ENCODE measurements at regions of chr13 and their contacts with region 1.

Region 1: DNA sequence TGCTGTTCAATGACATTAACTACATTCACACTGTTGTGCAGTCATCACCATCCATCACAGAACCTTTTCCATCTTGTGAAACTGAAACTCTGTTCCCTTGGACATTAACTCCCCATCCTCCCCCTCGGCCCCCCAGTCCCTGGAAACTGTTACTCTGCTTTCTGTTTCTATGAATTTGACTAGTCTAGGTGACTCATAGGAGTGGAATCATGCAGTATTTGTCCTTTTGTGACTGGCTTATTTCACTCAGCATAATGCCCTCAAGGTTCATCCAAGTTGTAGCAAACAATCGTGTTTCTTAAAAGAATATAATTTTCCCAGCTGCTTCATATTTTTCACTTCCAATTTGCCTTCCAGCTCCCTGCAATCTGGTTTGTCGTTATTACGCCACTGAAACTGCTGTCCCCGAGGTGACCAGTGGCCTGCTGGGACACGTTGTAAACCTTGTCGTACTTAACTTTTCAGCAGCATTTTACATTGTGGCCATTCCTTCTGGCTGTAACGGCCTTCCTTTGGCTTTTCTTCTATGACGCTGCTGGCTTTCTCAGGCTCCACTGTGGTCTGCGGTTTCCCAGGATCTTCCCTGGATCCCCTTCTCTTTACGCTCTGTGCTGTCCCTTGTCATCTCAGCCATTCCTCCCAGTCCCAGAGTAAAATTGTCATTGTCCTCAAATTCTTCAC is 74.0 kb downstream of the DHRS12 start:
- DNase-seq: no peak
- ATAC-seq: peak; percentile 43 to 80 (median 64)
- H3K4me3 ChIP-seq: peak overlapping the region in 1 of 10 donors; percentile 6
- H3K27ac ChIP-seq: peak overlapping the region; percentile 19 to 80 (median 58)
- H3K4me1 ChIP-seq: peaks cover 0 to 56% (median 27%) of the 10 kb centered on the region in 9 donors
- H3K27me3 ChIP-seq: no peaks in the 10 kb centered on the region
- CTCF ChIP-seq: no peak

Region 2: GRCh38 chr13:51435002-51435578 is 294.9 kb before region 1 on chr13:
- intact Hi-C with region 1: loop called in 5 of 10 experiments (anchors 5 to 10 kb)
- DNase-seq: no peak
- ATAC-seq: no peak
- H3K4me3 ChIP-seq: no peak overlapping the region
- H3K27ac ChIP-seq: no peak overlapping the region
- H3K4me1 ChIP-seq: peaks cover 0 to 6% (median 0%) of the 10 kb centered on the region in 9 donors
- H3K27me3 ChIP-seq: no peaks in the 10 kb centered on the region
- CTCF ChIP-seq: peak in 8 of 9 donors; percentile 19 to 72 (median 62)

Region 3: GRCh38 chr13:51444922-51445321 is 285.1 kb before region 1 on chr13:
- intact Hi-C with region 1: loop called in 8 of 10 experiments (anchors 5 to 10 kb)
- DNase-seq: no peak
- ATAC-seq: peak in 1 of 8 donors; percentile 28
- H3K4me3 ChIP-seq: no peak overlapping the region
- H3K27ac ChIP-seq: no peak overlapping the region
- H3K4me1 ChIP-seq: peaks cover 0 to 21% (median 5%) of the 10 kb centered on the region in 9 donors
- H3K27me3 ChIP-seq: no peaks in the 10 kb centered on the region
- CTCF ChIP-seq: peak in 6 of 9 donors; percentile 1 to 57 (median 42)

Region 4: DNA sequence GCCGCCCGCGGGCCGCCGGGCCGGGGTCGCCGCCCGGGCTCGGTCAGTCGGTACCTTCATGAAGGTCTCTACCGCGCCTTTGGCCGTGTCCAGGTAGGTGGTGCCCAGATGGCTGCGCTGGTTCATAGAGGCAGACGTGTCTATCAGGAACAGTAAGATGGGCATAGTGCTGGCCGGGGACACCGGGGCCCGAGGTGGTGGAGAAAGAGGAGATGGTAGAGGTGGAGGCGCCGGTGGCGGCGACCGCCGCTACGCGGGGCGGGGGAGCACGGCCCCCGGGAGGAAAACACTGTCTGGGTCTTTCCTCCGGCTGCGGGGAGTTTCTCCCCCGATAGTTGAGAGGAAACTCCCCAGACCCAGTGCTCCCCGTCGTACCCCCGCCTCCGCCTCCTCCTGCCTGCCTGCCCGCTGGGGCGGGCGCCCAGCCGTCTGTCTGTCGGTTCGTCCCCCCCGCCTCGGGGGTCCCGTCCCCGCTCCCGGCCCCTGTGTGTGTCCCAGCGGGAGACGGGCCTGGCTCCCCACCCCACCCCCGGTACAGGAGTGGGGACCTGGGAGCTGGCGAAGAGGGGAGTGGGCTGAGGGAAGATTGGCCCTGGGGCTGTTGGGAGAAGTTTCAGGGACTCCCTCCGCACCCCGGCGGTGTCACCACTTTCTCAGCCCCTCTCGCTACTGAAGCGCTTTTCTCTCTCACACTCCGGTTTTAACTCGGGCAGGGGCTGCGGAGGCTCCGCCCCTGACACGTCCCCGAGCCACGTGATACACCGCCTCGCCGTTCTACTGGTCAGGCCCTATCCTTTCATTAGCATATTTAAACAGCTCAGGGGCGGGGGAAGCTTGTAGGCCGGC is 277.4 kb before region 1 on chr13 and contains the start of gene INTS6:
- intact Hi-C with region 1: loop called in 7 of 10 experiments (anchors 5 to 10 kb)
- DNase-seq: peak; percentile 99 to 100
- ATAC-seq: peak; percentile 91 to 97 (median 96)
- H3K4me3 ChIP-seq: peak within 1 kb of the TSS; percentile 85 to 99 (median 94)
- H3K27ac ChIP-seq: peak within 1 kb of the TSS; percentile 91 to 100 (median 99)
- H3K4me1 ChIP-seq: peaks cover 2 to 47% (median 30%) of the 10 kb centered on the region in 9 donors
- H3K27me3 ChIP-seq: no peaks in the 10 kb centered on the region
- CTCF ChIP-seq: no peak
- total RNA-seq, gene INTS6: 20.2 to 31.1 (median 24.8) TPM

Region 5: DNA sequence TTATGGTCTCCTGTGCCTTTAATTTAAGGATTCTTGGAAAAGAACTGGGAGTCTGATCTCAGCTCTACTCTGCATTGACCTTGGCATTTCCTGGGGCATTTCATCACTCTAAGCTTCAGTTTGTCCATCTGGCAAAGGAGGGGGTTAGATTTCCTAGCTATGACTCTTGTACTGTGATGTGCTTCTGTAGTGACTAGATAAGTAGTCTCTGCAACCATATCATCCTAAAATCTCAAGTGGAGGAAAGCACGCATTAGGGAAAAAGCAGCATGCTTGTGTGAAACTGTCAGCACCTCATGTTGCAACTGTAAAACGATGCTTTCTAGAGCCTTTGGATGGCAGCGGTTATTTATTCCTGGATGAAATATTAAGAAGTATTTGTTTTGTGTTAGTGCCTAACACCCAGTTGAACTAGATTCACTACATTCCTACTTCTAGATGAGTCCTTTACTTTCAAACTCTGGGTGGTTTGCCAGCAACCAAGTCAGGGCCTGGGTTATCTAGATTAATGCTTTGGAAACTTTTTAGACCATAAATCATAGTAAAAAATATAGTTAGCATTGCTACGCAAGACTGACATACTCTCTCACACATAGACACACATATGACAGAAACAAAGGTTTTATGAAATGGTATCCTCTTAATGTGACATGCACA is 138.9 kb before region 1 on chr13:
- intact Hi-C with region 1: loop called in 8 of 10 experiments (anchors 5 to 10 kb)
- DNase-seq: peak in 1 of 2 donors; percentile 30
- ATAC-seq: peak; percentile 63 to 98 (median 81)
- H3K4me3 ChIP-seq: peak overlapping the region in 3 of 10 donors; percentile 9 to 21 (median 11)
- H3K27ac ChIP-seq: peak overlapping the region in 8 of 10 donors; percentile 35 to 81 (median 57)
- H3K4me1 ChIP-seq: peaks cover 0 to 78% (median 44%) of the 10 kb centered on the region in 9 donors
- H3K27me3 ChIP-seq: no peaks in the 10 kb centered on the region
- CTCF ChIP-seq: peak in 1 of 9 donors; percentile 18

Region 6: GRCh38 chr13:51614350-51614786 is 115.6 kb before region 1 on chr13:
- intact Hi-C with region 1: loop called in 1 of 10 experiments (anchors 10 kb)
- DNase-seq: peak in 1 of 2 donors; percentile 45
- ATAC-seq: peak in 7 of 8 donors; percentile 53 to 93 (median 72)
- H3K4me3 ChIP-seq: peak overlapping the region in 8 of 10 donors; percentile 1 to 35 (median 26)
- H3K27ac ChIP-seq: peak overlapping the region in 6 of 10 donors; percentile 15 to 73 (median 52)
- H3K4me1 ChIP-seq: peaks cover 4 to 39% (median 27%) of the 10 kb centered on the region in 9 donors
- H3K27me3 ChIP-seq: no peaks in the 10 kb centered on the region
- CTCF ChIP-seq: no peak